Right ventricle myocardium inferior (tissue), 1 donor: ENCODE measurements at regions of chr1 and their contacts with region 1.

Region 1: GRCh38 chr1:155934097-155934935 is at the start of gene KHDC4:
- DNase-seq: peak; percentile 97
- ATAC-seq: peak; percentile 99
- total RNA-seq, gene KHDC4: 22.0 TPM

Region 2: GRCh38 chr1:155989242-155990004 is 55.1 kb after region 1 on chr1:
- intact Hi-C with region 1: loop called (anchors 1 kb)
- DNase-seq: peak; percentile 86
- ATAC-seq: peak; percentile 88

Region 3: GRCh38 chr1:156082309-156083091 is 148.2 kb after region 1 on chr1 and contains the start of gene MEX3A:
- intact Hi-C with region 1: no loop called
- DNase-seq: peak; percentile 83
- ATAC-seq: peak; percentile 89
- total RNA-seq, gene MEX3A: 0.24 TPM